ENCODE measurements at regions of chr15 and their contacts with region 1.

Region 1: GRCh38 chr15:31128919-31129768 is 27.6 kb upstream of the TRPM1 start:
- DNase-seq: peak; percentile 59 to 96
- H3K4me3 ChIP-seq: no peak overlapping the region
- CTCF ChIP-seq: no peak
- POLR2A ChIP-seq: no peak

Region 2: GRCh38 chr15:30896211-30896606 is 232.9 kb before region 1 on chr15:
- intact Hi-C with region 1: loop called (anchors 5 kb)
- DNase-seq: no peak
- H3K4me3 ChIP-seq: no peak overlapping the region
- CTCF ChIP-seq: no peak
- POLR2A ChIP-seq: no peak

Region 3: GRCh38 chr15:31013538-31014228 is 115.5 kb before region 1 on chr15:
- intact Hi-C with region 1: no loop called
- DNase-seq: no peak
- H3K4me3 ChIP-seq: no peak overlapping the region
- CTCF ChIP-seq: no peak
- POLR2A ChIP-seq: no peak

Region 4: GRCh38 chr15:31379042-31379441 is 249.9 kb after region 1 on chr15:
- intact Hi-C with region 1: no loop called
- DNase-seq: no peak
- H3K4me3 ChIP-seq: no peak overlapping the region
- CTCF ChIP-seq: no peak
- POLR2A ChIP-seq: no peak

Region 5: GRCh38 chr15:31585240-31585639 is 456.1 kb after region 1 on chr15:
- intact Hi-C with region 1: no loop called
- DNase-seq: no peak
- H3K4me3 ChIP-seq: no peak overlapping the region
- CTCF ChIP-seq: no peak
- POLR2A ChIP-seq: no peak

Measured in lower leg skin (tissue), 4 donors.